ENCODE measurements at regions of chr21 and their contacts with region 1.

Region 1: GRCh38 chr21:26170471-26171257 is at the start of gene APP:
- DNase-seq: peak; percentile 81
- H3K4me3 ChIP-seq: peak within 1 kb of the TSS; percentile 86 to 89
- H3K27ac ChIP-seq: peak within 1 kb of the TSS; percentile 89
- H3K4me1 ChIP-seq: peaks cover 11% of the 10 kb centered on the region
- H3K27me3 ChIP-seq: no peaks in the 10 kb centered on the region
- CTCF ChIP-seq: peak; percentile 98 to 99 (median 99)
- POLR2A ChIP-seq: peak; percentile 94
- total RNA-seq, gene APP: 267 to 564 TPM

Region 2: GRCh38 chr21:25734904-25735645 is 435.6 kb before region 1 on chr21 and contains the starts of genes ATP5PF and GABPA:
- intact Hi-C with region 1: loop called (anchors 10 kb)
- DNase-seq: peak; percentile 97
- H3K4me3 ChIP-seq: peak within 1 kb of the TSS; percentile 96 to 99
- H3K27ac ChIP-seq: peak within 1 kb of the TSS; percentile 99
- H3K4me1 ChIP-seq: no peaks in the 10 kb centered on the region
- H3K27me3 ChIP-seq: no peaks in the 10 kb centered on the region
- CTCF ChIP-seq: peak in 1 of 4 experiments; percentile 1
- POLR2A ChIP-seq: no peak
- total RNA-seq, gene ATP5PF: 91.8 to 139 TPM
- total RNA-seq, gene GABPA: 18.9 to 19.9 TPM

Region 3: GRCh38 chr21:25831300-25831960 is 339.2 kb before region 1 on chr21:
- intact Hi-C with region 1: no loop called
- DNase-seq: no peak
- H3K4me3 ChIP-seq: no peak overlapping the region
- H3K27ac ChIP-seq: no peak overlapping the region
- H3K4me1 ChIP-seq: no peaks in the 10 kb centered on the region
- H3K27me3 ChIP-seq: no peaks in the 10 kb centered on the region
- CTCF ChIP-seq: no peak
- POLR2A ChIP-seq: no peak

Region 4: GRCh38 chr21:25881525-25882376 is 288.9 kb before region 1 on chr21:
- intact Hi-C with region 1: loop called (anchors 1 kb)
- DNase-seq: peak; percentile 38
- H3K4me3 ChIP-seq: no peak overlapping the region
- H3K27ac ChIP-seq: no peak overlapping the region
- H3K4me1 ChIP-seq: no peaks in the 10 kb centered on the region
- H3K27me3 ChIP-seq: no peaks in the 10 kb centered on the region
- CTCF ChIP-seq: peak; percentile 86 to 88 (median 86)
- POLR2A ChIP-seq: no peak

Region 5: GRCh38 chr21:25895565-25896205 is 275.0 kb before region 1 on chr21:
- intact Hi-C with region 1: loop called (anchors 5 kb)
- DNase-seq: no peak
- H3K4me3 ChIP-seq: no peak overlapping the region
- H3K27ac ChIP-seq: no peak overlapping the region
- H3K4me1 ChIP-seq: no peaks in the 10 kb centered on the region
- H3K27me3 ChIP-seq: no peaks in the 10 kb centered on the region
- CTCF ChIP-seq: peak; percentile 30 to 59 (median 50)
- POLR2A ChIP-seq: no peak

Region 6: DNA sequence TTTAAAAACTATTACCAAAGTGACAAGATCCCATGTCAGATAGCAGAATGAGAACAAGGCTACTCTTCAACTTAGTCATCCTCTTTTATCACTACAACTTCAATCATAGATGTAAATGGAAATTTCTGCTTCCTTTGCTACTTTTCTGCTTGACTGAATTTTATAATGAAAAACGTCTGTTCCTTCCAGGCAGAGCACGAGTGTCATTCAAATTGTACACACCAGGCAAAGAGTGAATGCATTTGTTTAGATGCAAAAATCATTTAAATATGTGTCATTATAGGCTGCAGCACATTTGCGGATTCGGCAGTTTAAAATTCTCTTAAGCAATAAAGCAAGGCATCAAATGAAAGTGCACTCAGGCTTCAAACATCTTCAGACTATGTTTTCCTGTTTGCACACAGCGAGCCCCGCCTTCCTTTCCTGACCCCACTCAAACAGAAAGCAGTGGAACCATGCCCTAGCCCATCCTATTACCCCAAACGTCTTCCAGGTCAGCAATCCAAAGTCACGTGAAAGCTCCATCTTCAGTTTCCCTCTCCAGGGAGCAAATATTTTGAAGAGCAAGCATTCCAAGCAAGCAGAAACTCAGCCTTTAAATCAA is 99.7 kb before region 1 on chr21:
- intact Hi-C with region 1: loop called (anchors 10 kb)
- DNase-seq: no peak
- H3K4me3 ChIP-seq: no peak overlapping the region
- H3K27ac ChIP-seq: no peak overlapping the region
- H3K4me1 ChIP-seq: no peaks in the 10 kb centered on the region
- H3K27me3 ChIP-seq: no peaks in the 10 kb centered on the region
- CTCF ChIP-seq: no peak
- POLR2A ChIP-seq: no peak

Region 7: DNA sequence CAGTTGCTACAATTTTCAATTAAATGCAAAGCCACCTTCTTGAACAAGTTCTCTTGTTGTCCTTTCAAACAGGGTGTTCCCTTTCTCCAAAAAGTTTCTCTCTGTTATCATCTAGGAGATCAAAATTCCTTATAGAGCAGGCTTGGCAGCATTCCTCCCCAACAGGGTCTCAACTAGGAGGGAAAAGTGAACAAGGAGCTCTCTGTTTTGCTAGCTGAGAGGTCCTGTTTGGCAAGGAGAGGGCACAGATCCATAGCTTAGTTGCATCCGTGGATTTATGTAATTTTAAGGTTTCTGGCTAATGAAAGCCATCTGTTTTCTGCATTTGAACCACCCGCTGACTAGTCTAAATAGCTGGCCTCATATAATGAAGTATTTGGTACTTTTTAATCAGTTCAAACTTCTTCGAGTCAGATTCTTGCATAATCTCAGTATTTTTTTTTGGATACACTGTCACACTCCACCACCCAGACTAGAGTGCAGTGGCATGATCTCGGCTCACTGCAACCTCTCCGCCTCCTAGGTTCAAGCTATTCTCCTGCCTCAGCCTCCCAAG is 54.1 kb before region 1 on chr21:
- intact Hi-C with region 1: no loop called
- DNase-seq: peak; percentile 28
- H3K4me3 ChIP-seq: no peak overlapping the region
- H3K27ac ChIP-seq: peak overlapping the region; percentile 28
- H3K4me1 ChIP-seq: peaks cover 5% of the 10 kb centered on the region
- H3K27me3 ChIP-seq: no peaks in the 10 kb centered on the region
- CTCF ChIP-seq: no peak
- POLR2A ChIP-seq: no peak

Region 8: GRCh38 chr21:26715878-26716506 is 545.3 kb after region 1 on chr21:
- intact Hi-C with region 1: loop called (anchors 5 kb)
- DNase-seq: peak; percentile 8
- H3K4me3 ChIP-seq: no peak overlapping the region
- H3K27ac ChIP-seq: no peak overlapping the region
- H3K4me1 ChIP-seq: no peaks in the 10 kb centered on the region
- H3K27me3 ChIP-seq: no peaks in the 10 kb centered on the region
- CTCF ChIP-seq: peak in 3 of 4 experiments; percentile 36 to 53 (median 50)
- POLR2A ChIP-seq: no peak